AG04450 (cell line): ENCODE measurements at regions of chr2 and their contacts with region 1.

Region 1: GRCh38 chr2:152635635-152636298 is 81.5 kb downstream of the PRPF40A start:
- DNase-seq: no peak
- H3K4me3 ChIP-seq: no peak overlapping the region
- H3K27ac ChIP-seq: no peak overlapping the region
- H3K27me3 ChIP-seq: no peaks in the 10 kb centered on the region
- CTCF ChIP-seq: peak; percentile 80

Region 2: GRCh38 chr2:152175458-152176325 is 460.1 kb before region 1 on chr2 and contains the start of gene STAM2:
- CTCF ChIA-PET with region 1: interaction called, 66 read pairs
- POLR2A ChIA-PET with region 1: interaction called, 9 read pairs
- DNase-seq: peak; percentile 83
- H3K4me3 ChIP-seq: peak within 1 kb of the TSS; percentile 90
- H3K27ac ChIP-seq: peak within 1 kb of the TSS; percentile 96
- H3K27me3 ChIP-seq: no peaks in the 10 kb centered on the region
- CTCF ChIP-seq: peak; percentile 96
- polyA plus RNA-seq, gene STAM2: 27.6 and 38.0 TPM in 2 replicates

Region 3: GRCh38 chr2:152200562-152201465 is 435.0 kb before region 1 on chr2:
- CTCF ChIA-PET with region 1: interaction called, 16 read pairs
- POLR2A ChIA-PET with region 1: no interaction called
- DNase-seq: peak; percentile 86
- H3K4me3 ChIP-seq: peak overlapping the region; percentile 46
- H3K27ac ChIP-seq: peak overlapping the region; percentile 76
- H3K27me3 ChIP-seq: no peaks in the 10 kb centered on the region
- CTCF ChIP-seq: no peak

Region 4: DNA sequence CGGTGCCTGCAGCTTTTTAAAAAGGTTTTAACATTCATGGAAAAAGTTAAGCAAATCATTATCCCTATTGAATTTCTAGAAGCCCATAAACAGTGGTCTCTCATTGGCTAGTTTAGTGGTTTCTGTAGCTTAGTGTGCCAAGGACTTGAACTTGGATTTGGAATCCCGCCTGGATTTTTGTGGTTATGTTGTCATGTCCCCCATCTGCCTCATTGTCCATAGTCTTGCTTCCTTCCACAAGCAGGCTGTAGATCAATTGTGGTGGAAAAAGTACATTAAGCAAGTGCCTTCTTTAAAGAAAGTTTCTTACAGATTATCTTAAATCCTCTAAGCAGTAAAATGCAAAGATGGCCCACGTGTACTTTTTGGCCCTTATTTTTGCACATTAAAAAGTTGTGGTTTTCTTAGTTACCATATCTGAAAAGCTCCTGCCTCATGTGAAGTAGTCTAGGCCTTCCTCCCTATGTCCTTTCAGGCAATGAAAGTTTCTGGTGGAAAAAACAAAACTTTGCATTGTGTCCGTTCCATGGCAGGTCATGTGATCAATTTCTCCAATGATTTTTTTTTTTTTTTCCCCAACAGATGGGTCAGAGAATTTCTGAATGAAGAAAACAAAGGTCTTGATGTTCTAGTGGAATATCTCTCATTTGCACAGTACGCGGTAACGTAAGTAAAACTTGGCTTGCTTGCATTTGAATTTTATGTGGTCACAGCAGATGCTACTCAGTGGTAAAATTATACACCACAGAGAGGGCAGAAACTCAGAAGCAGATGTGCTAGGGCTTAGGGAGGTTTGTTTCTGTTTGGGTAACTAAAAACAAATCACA is 77.4 kb before region 1 on chr2:
- CTCF ChIA-PET with region 1: interaction called, 11 read pairs
- POLR2A ChIA-PET with region 1: no interaction called
- DNase-seq: peak; percentile 72
- H3K4me3 ChIP-seq: no peak overlapping the region
- H3K27ac ChIP-seq: no peak overlapping the region
- H3K27me3 ChIP-seq: no peaks in the 10 kb centered on the region
- CTCF ChIP-seq: no peak

Region 5: GRCh38 chr2:152613235-152613634 is 22.5 kb before region 1 on chr2:
- CTCF ChIA-PET with region 1: interaction called, 18 read pairs
- POLR2A ChIA-PET with region 1: no interaction called
- DNase-seq: no peak
- H3K4me3 ChIP-seq: no peak overlapping the region
- H3K27ac ChIP-seq: no peak overlapping the region
- H3K27me3 ChIP-seq: no peaks in the 10 kb centered on the region
- CTCF ChIP-seq: no peak

Region 6: DNA sequence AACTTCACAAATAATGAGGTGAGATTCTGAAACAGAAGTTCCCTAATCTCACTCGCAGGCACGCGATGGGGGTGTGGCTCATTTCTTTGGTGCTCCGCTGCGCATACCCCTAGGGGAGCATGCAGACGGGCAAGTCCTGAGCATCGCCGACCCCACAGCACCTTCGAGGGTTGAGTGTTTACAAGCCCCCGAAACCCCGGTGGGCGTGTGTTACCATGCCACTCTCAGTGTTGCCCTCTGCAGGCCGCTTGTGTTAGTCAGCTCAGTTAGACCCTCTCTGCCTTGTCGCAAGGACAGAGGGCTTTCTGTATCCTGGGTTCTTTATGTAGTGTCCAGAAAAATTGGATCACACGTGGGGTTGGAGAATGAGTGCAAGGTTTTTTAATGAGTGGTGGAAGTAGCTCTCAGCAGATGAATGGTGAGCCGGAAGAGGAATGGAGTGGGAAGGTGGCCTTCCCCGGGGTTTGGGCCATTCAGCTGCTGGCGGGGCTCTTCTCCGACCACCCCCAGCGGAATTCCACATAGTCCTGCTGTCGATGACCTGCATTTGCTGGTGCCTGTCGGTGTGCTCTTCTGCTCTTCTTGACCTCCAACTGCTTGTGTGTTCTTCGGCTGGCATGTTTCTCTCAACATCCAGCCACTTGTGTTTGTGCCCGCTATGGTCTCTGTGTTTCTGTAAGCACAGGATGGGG is 651.5 kb after region 1 on chr2:
- CTCF ChIA-PET with region 1: no interaction called
- POLR2A ChIA-PET with region 1: no interaction called
- DNase-seq: no peak
- H3K4me3 ChIP-seq: no peak overlapping the region
- H3K27ac ChIP-seq: no peak overlapping the region
- H3K27me3 ChIP-seq: no peaks in the 10 kb centered on the region
- CTCF ChIP-seq: no peak